Colonic mucosa (tissue), 4 donors: ENCODE measurements at regions of chr2 and their contacts with region 1.

Region 1: DNA sequence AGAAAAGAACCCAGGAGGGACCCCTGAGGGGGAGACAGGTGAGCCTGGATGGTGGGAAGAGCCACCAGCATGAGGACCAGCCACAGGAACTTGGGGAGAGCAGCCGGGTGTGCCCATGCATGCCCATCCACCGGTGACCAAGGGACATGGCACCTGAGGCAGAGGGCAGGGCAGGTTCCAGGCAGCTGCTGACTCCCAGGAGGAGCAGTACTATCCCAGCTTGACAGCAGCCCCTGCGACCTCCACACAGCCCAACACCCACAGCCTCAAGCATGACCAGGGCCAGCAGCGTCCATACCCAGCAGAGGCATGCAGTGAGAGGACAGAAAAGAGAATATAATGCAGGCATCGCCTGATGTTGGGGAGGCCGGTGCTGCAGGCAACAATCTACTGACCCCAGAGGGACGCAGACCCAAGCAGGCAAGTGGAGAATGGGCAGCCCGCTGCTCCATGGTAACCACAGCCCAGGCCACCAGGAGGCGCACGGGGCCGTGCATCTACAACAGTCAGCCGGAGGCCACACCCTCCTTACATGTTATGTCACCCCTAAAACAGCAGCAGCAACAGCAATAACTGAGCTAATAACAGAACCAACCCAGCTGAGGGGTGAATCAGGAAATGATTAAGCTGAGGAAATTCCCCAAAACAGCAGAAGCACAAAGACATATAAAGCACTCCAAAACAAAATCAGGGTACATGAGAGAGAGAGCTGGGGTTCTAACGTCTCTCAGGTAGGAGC is 44.1 kb downstream of the ANKMY1 start:
- DNase-seq: peak; percentile 81
- H3K4me3 ChIP-seq: no peak overlapping the region
- H3K27ac ChIP-seq: no peak overlapping the region
- H3K4me1 ChIP-seq: no peaks in the 10 kb centered on the region
- H3K27me3 ChIP-seq: no peaks in the 10 kb centered on the region
- CTCF ChIP-seq: peak; percentile 85

Region 2: DNA sequence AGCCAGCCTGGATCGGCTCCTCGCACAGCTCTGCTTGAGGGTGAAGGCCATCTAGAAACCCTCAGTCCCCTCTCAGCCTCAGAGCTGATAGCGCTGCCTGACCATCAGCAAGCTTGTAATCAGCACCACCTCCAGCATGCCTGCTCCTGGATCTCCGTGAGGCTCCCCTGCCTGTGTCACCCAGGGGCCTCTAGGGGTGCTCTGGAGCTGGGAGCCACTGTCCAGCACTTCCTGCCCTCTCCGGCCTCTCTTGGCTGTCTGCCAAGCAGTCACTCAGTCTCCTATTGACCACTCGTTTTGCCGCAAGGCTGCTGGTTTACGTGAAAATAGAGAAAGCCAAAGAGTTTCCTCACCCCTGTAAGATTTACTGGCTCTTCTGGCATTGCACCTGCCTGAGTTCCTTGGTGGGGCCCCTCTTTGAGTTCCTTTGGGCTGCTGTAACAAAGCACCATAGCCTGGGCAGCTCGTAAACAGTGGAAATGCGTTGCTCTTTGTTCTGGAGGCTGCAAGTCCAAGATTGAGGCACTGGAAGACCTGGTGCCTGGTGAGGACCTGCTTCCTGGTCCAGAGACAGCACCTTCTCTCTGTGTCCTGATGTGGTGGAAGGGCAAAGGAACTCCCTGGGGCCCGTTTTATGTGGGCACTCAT is 90.7 kb after region 1 on chr2:
- intact Hi-C with region 1: loop called (anchors 10 kb)
- DNase-seq: peak; percentile 84
- H3K4me3 ChIP-seq: no peak overlapping the region
- H3K27ac ChIP-seq: peak overlapping the region; percentile 82
- H3K4me1 ChIP-seq: peaks cover 11% of the 10 kb centered on the region
- H3K27me3 ChIP-seq: no peaks in the 10 kb centered on the region
- CTCF ChIP-seq: peak; percentile 58